CD14-positive monocyte (primary cell): ENCODE measurements at regions of chr20 and their contacts with region 1.

Region 1: DNA sequence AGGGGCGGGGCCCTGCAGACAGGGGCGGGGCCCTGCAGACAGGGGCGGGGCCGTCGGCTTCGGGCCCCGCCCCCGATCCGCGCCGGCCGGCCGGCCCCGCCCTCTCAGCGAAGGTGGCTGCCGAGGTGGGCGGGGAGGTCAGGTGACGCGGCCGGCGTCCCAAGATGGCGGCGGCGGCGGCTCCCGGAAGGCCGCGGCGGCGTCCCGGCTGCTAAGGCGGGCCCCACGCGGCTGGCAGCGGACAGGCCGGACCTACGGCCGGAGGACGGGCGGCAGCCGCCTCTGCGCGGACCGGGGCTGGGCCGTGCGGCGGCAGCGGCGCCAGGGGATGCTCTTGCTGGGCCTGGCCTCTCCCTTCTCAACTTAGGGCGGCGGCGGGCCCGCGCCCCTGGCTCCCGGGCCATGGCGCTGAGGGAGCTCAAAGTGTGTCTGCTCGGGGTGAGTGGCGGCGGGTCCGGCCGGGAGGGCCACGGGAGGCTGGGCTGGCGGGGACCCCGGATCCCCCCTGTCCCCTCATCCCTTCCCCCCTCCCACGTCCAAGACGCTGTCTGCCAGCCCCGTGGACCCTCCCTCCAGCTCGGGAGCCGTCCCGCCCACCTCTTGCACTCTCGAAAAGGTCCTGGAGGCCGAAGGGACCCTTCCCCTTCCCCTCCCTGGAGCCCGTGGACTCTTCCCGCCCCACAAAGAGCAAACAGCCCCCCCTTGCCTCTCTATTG is at the start of gene RAB22A:
- DNase-seq: peak; percentile 77 to 90 (median 83)
- H3K4me3 ChIP-seq: peak within 1 kb of the TSS; percentile 85 to 99 (median 85)
- H3K4me3 Mint-ChIP-seq: peak within 1 kb of the TSS; percentile 88 to 91
- H3K27ac ChIP-seq: peak within 1 kb of the TSS; percentile 80 to 90
- H3K27ac Mint-ChIP-seq: peak within 1 kb of the TSS; percentile 88 to 98 (median 93)
- H3K4me1 ChIP-seq: peaks cover 46 to 57% of the 10 kb centered on the region in 2 donors
- H3K4me1 Mint-ChIP-seq: peaks cover 49% of the 10 kb centered on the region
- H3K27me3 ChIP-seq: no peaks in the 10 kb centered on the region
- H3K27me3 Mint-ChIP-seq: peaks cover 0 to 6% (median 0%) of the 10 kb centered on the region in 3 donors
- CTCF ChIP-seq: no peak
- polyA plus RNA-seq, gene RAB22A: 5.8 to 10.6 (median 9.8) TPM

Region 2: DNA sequence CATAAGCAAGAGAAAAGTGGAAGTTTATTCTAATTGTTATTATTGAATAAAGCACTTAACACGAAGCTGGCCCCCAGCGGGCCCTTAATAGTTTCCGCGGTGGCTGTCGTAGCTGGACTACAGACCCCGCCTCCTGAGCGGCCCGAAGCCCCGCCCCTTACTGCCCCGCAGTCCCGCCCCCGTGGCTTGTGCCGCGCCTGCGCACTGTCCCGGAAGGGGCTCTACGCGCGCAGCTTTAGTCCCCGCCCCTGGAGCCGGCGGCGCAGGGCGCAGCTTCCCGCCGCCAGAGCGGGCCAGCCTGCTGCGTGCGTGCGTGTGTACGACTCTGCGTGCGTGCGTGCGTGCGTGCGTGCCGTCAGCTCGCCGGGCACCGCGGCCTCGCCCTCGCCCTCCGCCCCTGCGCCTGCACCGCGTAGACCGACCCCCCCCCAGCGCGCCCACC is 79.2 kb after region 1 on chr20 and contains the start of gene VAPB:
- intact Hi-C with region 1: loop called (anchors 1 to 5 kb)
- DNase-seq: peak; percentile 95 to 98 (median 96)
- H3K4me3 ChIP-seq: peak within 1 kb of the TSS; percentile 75 to 89 (median 77)
- H3K4me3 Mint-ChIP-seq: peak within 1 kb of the TSS; percentile 89 to 95
- H3K27ac ChIP-seq: peak within 1 kb of the TSS; percentile 82 to 99
- H3K27ac Mint-ChIP-seq: peak within 1 kb of the TSS; percentile 94 to 98 (median 97)
- H3K4me1 ChIP-seq: peaks cover 18 to 28% of the 10 kb centered on the region in 2 donors
- H3K4me1 Mint-ChIP-seq: peaks cover 36% of the 10 kb centered on the region
- H3K27me3 ChIP-seq: peaks cover 0 to 2% of the 10 kb centered on the region in 2 donors
- H3K27me3 Mint-ChIP-seq: peaks cover 4 to 17% (median 7%) of the 10 kb centered on the region in 3 donors
- CTCF ChIP-seq: no peak
- polyA plus RNA-seq, gene VAPB: 8.5 to 14.3 (median 10.1) TPM

Region 3: GRCh38 chr20:58691773-58692593 is 382.2 kb after region 1 on chr20:
- intact Hi-C with region 1: no loop called
- DNase-seq: peak; percentile 93 to 94 (median 93)
- H3K4me3 ChIP-seq: peak overlapping the region in 2 of 3 experiments; percentile 20 to 58
- H3K4me3 Mint-ChIP-seq: peak overlapping the region; percentile 72 to 84
- H3K27ac ChIP-seq: peak overlapping the region; percentile 99
- H3K27ac Mint-ChIP-seq: peak overlapping the region; percentile 99
- H3K4me1 ChIP-seq: peaks cover 47 to 61% of the 10 kb centered on the region in 2 donors
- H3K4me1 Mint-ChIP-seq: peaks cover 34% of the 10 kb centered on the region
- H3K27me3 ChIP-seq: no peaks in the 10 kb centered on the region
- H3K27me3 Mint-ChIP-seq: peaks cover 0 to 4% (median 2%) of the 10 kb centered on the region in 3 donors
- CTCF ChIP-seq: peak; percentile 20